Mammary epithelial cell (primary cell): ENCODE measurements at regions of chr16 and their contacts with region 1.

Region 1: GRCh38 chr16:9479008-9479407 is 387.6 kb downstream of the HAPSTR1 start:
- DNase-seq: no peak
- H3K4me3 ChIP-seq: no peak overlapping the region
- H3K27ac ChIP-seq: no peak overlapping the region
- H3K4me1 ChIP-seq: no peaks in the 10 kb centered on the region
- H3K27me3 ChIP-seq: no peaks in the 10 kb centered on the region
- CTCF ChIP-seq: no peak

Region 2: DNA sequence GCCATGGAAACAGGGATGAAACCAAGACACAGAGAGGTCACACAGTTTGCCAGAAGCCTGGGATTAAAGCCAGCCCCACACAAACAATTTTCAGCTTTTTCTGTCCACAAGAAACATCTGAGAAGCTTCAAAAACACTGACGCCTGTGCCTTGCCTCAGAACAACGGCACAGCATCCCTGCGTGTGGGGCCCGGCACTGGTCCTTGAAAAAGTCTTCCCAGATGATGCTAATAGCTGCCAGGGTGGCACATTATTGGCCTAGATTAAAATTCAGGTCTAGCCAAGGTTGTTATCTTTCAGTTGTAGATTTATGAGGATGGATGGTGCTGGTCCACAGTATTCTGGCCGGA is 66.1 kb before region 1 on chr16:
- CTCF ChIA-PET with region 1: no interaction called
- dilution Hi-C with region 1: loop called (anchors 5 kb)
- in situ Hi-C with region 1: no loop called
- intact Hi-C with region 1: no loop called
- DNase-seq: no peak
- H3K4me3 ChIP-seq: no peak overlapping the region
- H3K27ac ChIP-seq: no peak overlapping the region
- H3K4me1 ChIP-seq: no peaks in the 10 kb centered on the region
- H3K27me3 ChIP-seq: no peaks in the 10 kb centered on the region
- CTCF ChIP-seq: no peak

Region 3: DNA sequence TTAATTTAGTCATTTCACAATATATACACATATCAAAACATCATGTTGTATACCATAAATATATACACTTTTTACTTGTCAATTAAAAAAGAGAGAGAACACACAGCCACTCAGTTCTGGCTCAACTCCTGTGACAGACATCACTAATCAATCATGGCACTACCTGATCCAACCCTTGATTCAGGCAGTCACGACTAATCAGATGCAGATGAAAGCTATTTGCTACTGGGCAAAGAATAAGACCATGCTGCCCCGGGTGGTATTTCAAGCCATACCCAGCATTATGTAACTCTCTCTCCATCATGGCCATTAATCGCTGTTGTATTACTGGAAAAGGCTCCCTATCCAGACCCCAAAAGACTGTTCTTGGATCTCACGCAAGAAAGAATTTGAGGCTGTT is 41.9 kb before region 1 on chr16:
- CTCF ChIA-PET with region 1: no interaction called
- dilution Hi-C with region 1: no loop called
- in situ Hi-C with region 1: no loop called
- intact Hi-C with region 1: no loop called
- DNase-seq: no peak
- H3K4me3 ChIP-seq: no peak overlapping the region
- H3K27ac ChIP-seq: no peak overlapping the region
- H3K4me1 ChIP-seq: no peaks in the 10 kb centered on the region
- H3K27me3 ChIP-seq: no peaks in the 10 kb centered on the region
- CTCF ChIP-seq: no peak

Region 4: DNA sequence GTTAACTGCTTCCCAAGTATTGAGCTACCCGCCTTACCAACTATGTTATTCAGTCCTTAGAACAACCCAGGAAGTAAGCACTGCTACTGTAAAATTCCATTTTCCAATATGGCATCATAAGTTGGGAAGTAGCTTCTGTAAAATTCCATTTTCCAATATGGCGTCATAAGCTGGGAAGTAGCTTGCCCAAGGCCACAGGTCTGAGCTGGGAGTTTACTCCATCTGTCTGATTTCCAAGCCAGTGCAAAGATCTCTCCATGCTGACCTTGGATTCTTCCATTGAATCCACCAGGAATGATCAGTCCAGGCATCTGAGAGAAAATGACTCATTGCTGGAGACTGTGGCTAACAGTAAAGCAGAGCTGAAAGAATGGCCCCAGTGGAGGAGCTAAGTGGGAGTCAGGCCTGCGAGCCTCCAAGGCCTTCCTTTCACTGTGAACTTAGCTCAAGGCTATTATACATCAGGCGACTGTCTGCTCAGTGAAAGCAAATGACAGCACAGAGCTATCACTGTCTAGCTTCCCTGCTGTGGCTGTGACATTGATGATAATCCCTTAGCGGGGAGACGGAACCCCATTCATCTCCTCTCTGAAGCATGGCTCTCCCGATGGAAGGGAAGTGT is 42.9 kb after region 1 on chr16:
- CTCF ChIA-PET with region 1: no interaction called
- dilution Hi-C with region 1: no loop called
- in situ Hi-C with region 1: no loop called
- intact Hi-C with region 1: no loop called
- DNase-seq: no peak
- H3K4me3 ChIP-seq: no peak overlapping the region
- H3K27ac ChIP-seq: no peak overlapping the region
- H3K4me1 ChIP-seq: no peaks in the 10 kb centered on the region
- H3K27me3 ChIP-seq: no peaks in the 10 kb centered on the region
- CTCF ChIP-seq: no peak